ENCODE measurements at regions of chr2 and their contacts with region 1.

Region 1: DNA sequence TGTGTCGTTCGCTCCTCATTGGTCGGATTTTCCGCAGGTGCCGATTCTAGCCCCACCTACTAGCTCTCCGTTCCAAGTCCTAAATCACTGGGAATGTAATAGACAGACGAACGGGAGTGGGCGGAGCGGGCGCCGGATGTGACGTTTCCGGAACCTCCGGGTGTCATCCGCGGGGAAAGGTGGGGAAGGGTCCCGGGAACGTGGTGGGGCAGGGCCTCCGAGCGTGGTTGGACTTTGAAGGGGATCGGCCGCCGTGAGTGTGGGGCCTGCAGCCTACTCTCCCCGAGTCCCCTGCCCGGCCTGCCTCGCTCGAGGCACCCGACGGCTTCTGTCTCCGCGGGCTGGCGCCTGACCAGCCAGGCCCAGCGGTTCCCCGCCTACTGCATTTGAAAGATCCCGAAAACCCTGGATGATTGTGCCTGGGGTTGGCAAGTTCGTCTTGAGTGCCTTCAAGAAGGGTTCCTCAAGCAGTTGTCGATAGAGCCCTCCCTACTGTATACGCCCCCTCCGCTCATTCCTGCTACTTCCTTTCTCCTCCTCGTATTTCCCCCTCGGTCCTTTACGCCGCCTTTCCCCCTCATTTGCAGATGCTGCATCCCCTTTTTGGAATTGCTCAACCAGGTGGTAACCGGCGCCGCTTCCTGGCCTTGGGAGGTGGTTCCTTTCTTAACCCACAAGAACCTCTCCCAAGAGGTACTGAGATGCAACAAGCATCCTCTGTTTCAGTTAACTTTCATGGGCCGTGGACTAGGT is at the start of gene STAMBP:
- DNase-seq: peak; percentile 95 to 97 (median 97)
- ATAC-seq: peak; percentile 99 to 100 (median 99)
- H3K4me3 ChIP-seq: peak within 1 kb of the TSS; percentile 53 to 88 (median 80)
- H3K27ac ChIP-seq: peak within 1 kb of the TSS; percentile 73 to 85 (median 79)
- H3K4me1 ChIP-seq: peaks cover 7 to 14% (median 14%) of the 10 kb centered on the region in 3 donors
- H3K27me3 ChIP-seq: no peaks in the 10 kb centered on the region
- CTCF ChIP-seq: no peak
- total RNA-seq, gene STAMBP: 11.7 to 24.4 (median 13.2) TPM

Region 2: DNA sequence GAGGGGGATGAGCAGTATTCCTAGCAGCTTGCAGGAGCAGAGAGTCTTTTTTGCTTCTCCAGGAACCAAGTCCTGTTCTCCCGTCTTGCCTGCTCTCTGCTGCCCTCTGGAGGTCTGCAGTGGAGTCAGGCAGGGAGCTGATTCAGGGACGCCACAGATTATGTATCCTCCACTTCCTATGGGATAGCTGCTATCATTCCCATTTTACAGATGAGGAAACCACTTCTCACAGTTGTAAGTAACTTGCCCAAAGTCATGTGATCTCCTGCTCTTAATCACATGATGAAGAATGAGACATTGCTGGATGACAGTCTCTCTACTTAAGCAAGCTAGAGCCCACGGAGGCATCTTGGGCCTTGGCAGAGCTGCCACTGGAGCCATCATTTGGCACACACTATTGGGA is 505.9 kb after region 1 on chr2:
- intact Hi-C with region 1: loop called in 1 of 3 experiments (anchors 10 kb)
- DNase-seq: peak; percentile 48 to 89 (median 76)
- ATAC-seq: peak; percentile 77 to 98 (median 94)
- H3K4me3 ChIP-seq: no peak overlapping the region
- H3K27ac ChIP-seq: no peak overlapping the region
- H3K4me1 ChIP-seq: no peaks in the 10 kb centered on the region
- H3K27me3 ChIP-seq: no peaks in the 10 kb centered on the region
- CTCF ChIP-seq: peak; percentile 82 to 96 (median 90)

Measured in pancreas (tissue), 10 donors.